CD4-positive, alpha-beta memory T cell (primary cell): ENCODE measurements at regions of chr10 and their contacts with region 1.

Region 1: GRCh38 chr10:101141616-101142532 is 10.8 kb downstream of the TLX1 start:
- DNase-seq: peak; percentile 71 to 75 (median 72)
- H3K4me3 ChIP-seq: no peak overlapping the region
- H3K4me3 Mint-ChIP-seq: peak overlapping the region in 3 of 8 donors; percentile 47 to 68 (median 48)
- H3K27ac ChIP-seq: no peak overlapping the region
- H3K27ac Mint-ChIP-seq: no peak overlapping the region
- H3K4me1 ChIP-seq: peaks cover 31% of the 10 kb centered on the region
- H3K4me1 Mint-ChIP-seq: peaks cover 8 to 39% (median 22%) of the 10 kb centered on the region in 4 donors
- H3K27me3 ChIP-seq: peaks cover 79% of the 10 kb centered on the region
- H3K27me3 Mint-ChIP-seq: peaks cover 64 to 82% of the 10 kb centered on the region in 2 donors

Region 2: GRCh38 chr10:101050208-101051069 is 91.4 kb before region 1 on chr10:
- CTCF ChIA-PET with region 1: interaction called, 13 read pairs
- POLR2A ChIA-PET with region 1: no interaction called
- intact Hi-C with region 1: no loop called
- DNase-seq: peak; percentile 72 to 81 (median 73)
- H3K4me3 ChIP-seq: no peak overlapping the region
- H3K4me3 Mint-ChIP-seq: peak overlapping the region in 6 of 8 donors; percentile 13 to 65 (median 41)
- H3K27ac ChIP-seq: no peak overlapping the region
- H3K27ac Mint-ChIP-seq: peak overlapping the region in 1 of 7 donors; percentile 75
- H3K4me1 ChIP-seq: peaks cover 10% of the 10 kb centered on the region
- H3K4me1 Mint-ChIP-seq: peaks cover 3 to 25% (median 8%) of the 10 kb centered on the region in 4 donors
- H3K27me3 ChIP-seq: peaks cover 33% of the 10 kb centered on the region
- H3K27me3 Mint-ChIP-seq: peaks cover 35 to 38% of the 10 kb centered on the region in 2 donors

Region 3: DNA sequence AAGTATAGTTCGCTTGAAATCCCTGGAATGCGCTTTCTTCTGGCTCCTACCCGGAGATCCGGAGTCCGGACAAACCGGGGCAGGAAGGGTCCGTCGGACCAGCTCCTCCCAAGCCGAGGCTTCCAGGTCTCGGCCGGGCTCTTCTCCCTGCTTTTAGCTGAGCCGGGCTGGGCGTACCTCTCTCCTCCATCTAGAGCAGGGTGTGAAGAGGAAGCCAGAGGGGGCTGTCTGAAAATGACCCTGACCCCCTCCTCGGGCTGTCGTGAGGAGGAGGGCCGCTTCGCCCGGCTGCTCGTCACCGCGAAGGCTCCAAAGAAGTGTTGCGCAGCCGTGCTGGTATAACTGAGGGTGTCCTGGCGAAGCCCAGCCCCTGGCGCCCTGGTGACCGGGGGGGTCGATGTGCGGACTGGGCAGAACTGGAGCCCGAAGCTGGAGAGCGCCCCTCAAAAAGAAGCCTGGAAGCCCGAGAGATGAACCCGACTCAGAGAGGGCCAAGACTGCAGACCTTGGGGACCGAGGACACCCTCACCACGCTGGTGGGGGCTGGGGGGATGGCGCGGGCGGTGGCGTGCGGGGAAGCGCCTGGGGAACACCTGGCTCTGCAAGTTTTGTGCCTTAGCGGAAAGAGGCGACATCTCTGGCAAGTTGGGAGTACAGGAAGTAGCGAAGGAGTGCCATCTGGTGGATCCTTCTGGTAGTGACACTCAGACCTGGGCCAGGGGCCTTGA is 74.4 kb before region 1 on chr10:
- CTCF ChIA-PET with region 1: interaction called, 12 read pairs
- POLR2A ChIA-PET with region 1: no interaction called
- intact Hi-C with region 1: no loop called
- DNase-seq: peak; percentile 68 to 78 (median 72)
- H3K4me3 ChIP-seq: peak overlapping the region; percentile 52 to 76
- H3K4me3 Mint-ChIP-seq: peak overlapping the region; percentile 90 to 97 (median 92)
- H3K27ac ChIP-seq: no peak overlapping the region
- H3K27ac Mint-ChIP-seq: peak overlapping the region in 3 of 7 donors; percentile 4 to 75 (median 24)
- H3K4me1 ChIP-seq: peaks cover 28% of the 10 kb centered on the region
- H3K4me1 Mint-ChIP-seq: peaks cover 4 to 32% (median 10%) of the 10 kb centered on the region in 4 donors
- H3K27me3 ChIP-seq: peaks cover 45% of the 10 kb centered on the region
- H3K27me3 Mint-ChIP-seq: peaks cover 23 to 44% of the 10 kb centered on the region in 2 donors

Region 4: GRCh38 chr10:101095542-101096213 is 46.2 kb before region 1 on chr10:
- CTCF ChIA-PET with region 1: interaction called, 463 read pairs
- POLR2A ChIA-PET with region 1: interaction called, 12 read pairs
- intact Hi-C with region 1: loop called (anchors 1 kb)
- DNase-seq: peak; percentile 60 to 74 (median 64)
- H3K4me3 ChIP-seq: no peak overlapping the region
- H3K4me3 Mint-ChIP-seq: no peak overlapping the region
- H3K27ac ChIP-seq: no peak overlapping the region
- H3K27ac Mint-ChIP-seq: no peak overlapping the region
- H3K4me1 ChIP-seq: no peaks in the 10 kb centered on the region
- H3K4me1 Mint-ChIP-seq: no peaks in the 10 kb centered on the region
- H3K27me3 ChIP-seq: peaks cover 2% of the 10 kb centered on the region
- H3K27me3 Mint-ChIP-seq: peaks cover 34 to 53% of the 10 kb centered on the region in 2 donors

Region 5: GRCh38 chr10:101130984-101131961 is 10.6 kb before region 1 on chr10 and contains the start of gene TLX1:
- CTCF ChIA-PET with region 1: interaction called, 55 read pairs
- POLR2A ChIA-PET with region 1: no interaction called
- intact Hi-C with region 1: no loop called
- DNase-seq: no peak
- H3K4me3 ChIP-seq: no peak within 1 kb of the TSS
- H3K4me3 Mint-ChIP-seq: peak within 1 kb of the TSS; percentile 59 to 83 (median 72)
- H3K27ac ChIP-seq: no peak within 1 kb of the TSS
- H3K27ac Mint-ChIP-seq: peak within 1 kb of the TSS in 2 of 7 donors; percentile 24 to 35
- H3K4me1 ChIP-seq: peaks cover 30% of the 10 kb centered on the region
- H3K4me1 Mint-ChIP-seq: peaks cover 12 to 41% (median 28%) of the 10 kb centered on the region in 4 donors
- H3K27me3 ChIP-seq: peaks cover 37% of the 10 kb centered on the region
- H3K27me3 Mint-ChIP-seq: peaks cover 65 to 66% of the 10 kb centered on the region in 2 donors
- total RNA-seq, gene TLX1: not detected

Region 6: GRCh38 chr10:101161494-101162299 is 19.8 kb after region 1 on chr10:
- CTCF ChIA-PET with region 1: interaction called, 20 read pairs
- POLR2A ChIA-PET with region 1: no interaction called
- intact Hi-C with region 1: no loop called
- DNase-seq: peak; percentile 62 to 71 (median 69)
- H3K4me3 ChIP-seq: no peak overlapping the region
- H3K4me3 Mint-ChIP-seq: peak overlapping the region in 3 of 8 donors; percentile 41 to 69 (median 62)
- H3K27ac ChIP-seq: no peak overlapping the region
- H3K27ac Mint-ChIP-seq: peak overlapping the region in 2 of 7 donors; percentile 14 to 20
- H3K4me1 ChIP-seq: peaks cover 8% of the 10 kb centered on the region
- H3K4me1 Mint-ChIP-seq: peaks cover 6 to 14% (median 11%) of the 10 kb centered on the region in 4 donors
- H3K27me3 ChIP-seq: peaks cover 7% of the 10 kb centered on the region
- H3K27me3 Mint-ChIP-seq: peaks cover 38 to 51% of the 10 kb centered on the region in 2 donors

Region 7: GRCh38 chr10:102917962-102918816 is 1776.3 kb after region 1 on chr10 and contains the start of gene CNNM2:
- CTCF ChIA-PET with region 1: no interaction called
- POLR2A ChIA-PET with region 1: no interaction called
- intact Hi-C with region 1: no loop called
- DNase-seq: peak; percentile 100
- H3K4me3 ChIP-seq: peak within 1 kb of the TSS; percentile 84 to 91
- H3K4me3 Mint-ChIP-seq: peak within 1 kb of the TSS; percentile 94 to 96 (median 95)
- H3K27ac ChIP-seq: peak within 1 kb of the TSS; percentile 72
- H3K27ac Mint-ChIP-seq: peak within 1 kb of the TSS; percentile 92 to 98 (median 96)
- H3K4me1 ChIP-seq: peaks cover 53% of the 10 kb centered on the region
- H3K4me1 Mint-ChIP-seq: peaks cover 35 to 59% (median 51%) of the 10 kb centered on the region in 4 donors
- H3K27me3 ChIP-seq: no peaks in the 10 kb centered on the region
- H3K27me3 Mint-ChIP-seq: peaks cover 4 to 6% of the 10 kb centered on the region in 2 donors
- total RNA-seq, gene CNNM2: 11.9 to 14.4 TPM